ENCODE measurements at regions of chr1 and their contacts with region 1.

Region 1: DNA sequence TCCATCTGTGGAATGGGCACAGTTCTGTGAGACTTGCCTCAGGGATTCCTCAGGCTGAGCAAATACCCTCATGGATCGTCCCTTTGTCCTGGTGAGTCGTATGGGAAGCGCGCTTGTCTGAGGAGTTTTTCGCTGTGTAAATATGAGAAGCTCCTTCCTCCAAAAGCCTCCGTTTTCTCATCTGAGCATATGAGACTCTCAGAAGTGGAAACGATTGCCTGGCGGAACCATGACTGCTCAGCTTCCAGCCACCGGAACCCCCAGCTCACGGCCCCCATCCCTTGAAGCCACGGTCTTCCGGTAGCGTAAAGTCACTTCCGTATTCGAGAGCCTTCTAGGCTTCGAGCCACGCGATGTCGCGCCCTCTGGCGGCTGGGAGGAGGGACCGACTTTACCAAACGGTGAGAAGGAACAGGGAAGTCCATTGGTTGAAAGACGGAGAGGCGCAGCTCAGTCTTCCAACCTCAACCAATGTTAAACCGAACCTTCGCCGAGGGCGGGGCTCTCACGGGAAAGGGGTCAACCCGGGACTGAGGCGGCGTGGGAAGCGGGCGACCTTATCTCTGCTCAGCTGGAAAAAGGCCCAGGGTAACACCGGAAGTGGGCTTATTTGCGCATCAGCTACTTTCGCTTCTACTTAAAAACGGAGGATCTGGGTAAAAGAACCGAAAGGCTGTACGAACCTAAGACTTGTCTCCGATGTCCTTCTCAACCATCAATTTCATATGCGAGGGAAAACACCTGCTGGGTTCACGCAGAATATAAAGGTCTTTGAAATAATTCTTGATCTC is 46.2 kb downstream of the AZIN2 start:
- DNase-seq: peak; percentile 97 to 99
- H3K4me3 ChIP-seq: peak overlapping the region; percentile 85
- H3K27ac ChIP-seq: peak overlapping the region; percentile 77
- H3K4me1 ChIP-seq: peaks cover 28% of the 10 kb centered on the region
- H3K27me3 ChIP-seq: no peaks in the 10 kb centered on the region
- CTCF ChIP-seq: peak; percentile 88

Region 2: DNA sequence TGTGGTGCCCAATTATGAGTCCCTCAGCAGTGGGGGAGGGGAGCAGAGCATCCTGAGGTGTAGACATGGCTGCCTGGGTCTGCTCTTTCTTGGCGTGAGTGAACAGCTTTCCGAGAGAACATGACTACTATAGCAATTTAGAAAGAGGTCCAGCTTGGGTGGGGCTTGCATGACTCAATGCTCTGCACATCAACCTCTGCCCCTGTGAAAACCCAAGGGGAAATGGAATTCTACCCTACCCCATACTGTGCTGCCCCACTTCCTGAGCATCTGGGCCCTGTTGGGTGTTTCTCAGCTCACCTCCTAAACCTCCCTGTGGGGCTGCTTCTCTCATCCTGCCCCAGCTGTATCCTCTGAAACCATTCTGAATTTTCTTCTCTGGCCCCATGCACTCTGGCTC is 54.5 kb before region 1 on chr1:
- CTCF ChIA-PET with region 1: no interaction called
- POLR2A ChIA-PET with region 1: no interaction called
- intact Hi-C with region 1: no loop called
- DNase-seq: no peak
- H3K4me3 ChIP-seq: no peak overlapping the region
- H3K27ac ChIP-seq: no peak overlapping the region
- H3K4me1 ChIP-seq: peaks cover 11% of the 10 kb centered on the region
- H3K27me3 ChIP-seq: no peaks in the 10 kb centered on the region
- CTCF ChIP-seq: no peak

Region 3: DNA sequence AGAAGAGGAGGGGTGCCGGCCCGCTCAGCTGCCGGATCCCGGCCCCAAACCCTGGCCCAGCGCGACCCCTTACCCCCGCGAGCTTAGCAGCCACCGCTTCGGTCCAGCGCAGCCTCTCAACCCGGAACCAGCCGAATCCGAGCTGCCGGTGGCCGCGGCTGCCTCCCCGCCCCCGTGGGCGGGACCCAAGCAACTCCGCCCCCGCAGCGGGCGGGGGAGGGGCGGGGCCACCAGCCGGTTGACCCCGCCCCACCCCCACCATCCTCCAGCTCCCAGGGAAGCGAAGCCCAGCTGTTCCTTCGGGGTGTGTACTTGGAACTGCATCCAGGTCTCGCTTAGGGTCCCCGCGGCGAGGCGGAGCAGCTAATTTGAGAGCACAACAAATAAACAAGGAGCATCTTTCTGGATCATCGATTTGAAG is 54.7 kb after region 1 on chr1 and contains the start of gene TRIM62:
- CTCF ChIA-PET with region 1: interaction called, 4 read pairs
- POLR2A ChIA-PET with region 1: interaction called, 5 read pairs
- intact Hi-C with region 1: loop called (anchors 5 kb)
- DNase-seq: peak; percentile 54 to 77
- H3K4me3 ChIP-seq: peak within 1 kb of the TSS; percentile 87
- H3K27ac ChIP-seq: no peak within 1 kb of the TSS
- H3K4me1 ChIP-seq: peaks cover 4% of the 10 kb centered on the region; the same call in 1 of the 2 replicates
- H3K27me3 ChIP-seq: no peaks in the 10 kb centered on the region
- CTCF ChIP-seq: no peak
- total RNA-seq, gene TRIM62: 9.9 and 14.3 TPM in 2 replicates

Region 4: GRCh38 chr1:33211972-33212371 is 84.8 kb after region 1 on chr1:
- CTCF ChIA-PET with region 1: no interaction called
- POLR2A ChIA-PET with region 1: interaction called, 14 read pairs
- intact Hi-C with region 1: no loop called
- DNase-seq: no peak
- H3K4me3 ChIP-seq: no peak overlapping the region
- H3K27ac ChIP-seq: no peak overlapping the region
- H3K4me1 ChIP-seq: no peaks in the 10 kb centered on the region
- H3K27me3 ChIP-seq: no peaks in the 10 kb centered on the region
- CTCF ChIP-seq: no peak

Region 5: DNA sequence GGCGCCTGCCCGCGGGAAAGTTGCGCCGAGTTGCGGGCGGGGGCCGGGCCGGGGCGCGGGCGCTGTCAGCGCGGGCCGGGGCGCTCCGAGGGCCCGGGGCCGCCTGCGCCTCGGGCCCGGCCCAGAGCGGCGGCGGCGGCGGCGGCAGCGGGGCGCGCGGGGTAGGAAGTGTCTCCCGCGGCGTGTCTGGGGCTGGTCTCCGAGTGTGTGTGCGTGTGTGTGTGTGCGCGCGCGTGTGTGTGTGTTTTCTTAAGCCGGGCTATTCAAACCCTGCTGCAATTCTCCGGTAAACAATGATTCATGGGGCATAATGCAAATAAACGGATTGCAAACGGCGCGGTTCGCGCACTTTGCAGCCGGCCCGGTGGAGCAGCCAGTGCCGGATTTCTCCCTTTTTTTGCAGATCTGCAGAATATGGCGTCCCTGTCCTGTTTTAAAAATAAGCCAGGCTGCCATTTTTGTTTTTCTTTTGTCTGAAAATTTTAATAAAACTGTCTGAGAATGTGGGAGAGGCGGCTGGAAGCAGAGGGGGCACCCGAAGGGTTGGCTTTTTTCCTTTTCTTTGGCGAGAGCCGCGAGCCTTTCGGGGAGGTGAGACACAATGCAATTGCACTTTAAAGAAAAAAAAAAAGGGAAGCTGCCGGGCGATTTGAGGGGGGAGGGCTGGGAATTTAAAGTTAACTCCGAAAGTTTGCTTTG is 129.7 kb after region 1 on chr1:
- CTCF ChIA-PET with region 1: no interaction called
- POLR2A ChIA-PET with region 1: interaction called, 19 read pairs
- intact Hi-C with region 1: no loop called
- DNase-seq: peak; percentile 41 to 77
- H3K4me3 ChIP-seq: peak overlapping the region; percentile 67
- H3K27ac ChIP-seq: peak overlapping the region; percentile 62
- H3K4me1 ChIP-seq: peaks cover 22% of the 10 kb centered on the region
- H3K27me3 ChIP-seq: no peaks in the 10 kb centered on the region
- CTCF ChIP-seq: no peak

Region 6: GRCh38 chr1:33312413-33312749 is 185.2 kb after region 1 on chr1:
- CTCF ChIA-PET with region 1: no interaction called
- POLR2A ChIA-PET with region 1: no interaction called
- intact Hi-C with region 1: no loop called
- DNase-seq: no peak
- H3K4me3 ChIP-seq: no peak overlapping the region
- H3K27ac ChIP-seq: no peak overlapping the region
- H3K4me1 ChIP-seq: no peaks in the 10 kb centered on the region
- H3K27me3 ChIP-seq: no peaks in the 10 kb centered on the region
- CTCF ChIP-seq: no peak

Region 7: DNA sequence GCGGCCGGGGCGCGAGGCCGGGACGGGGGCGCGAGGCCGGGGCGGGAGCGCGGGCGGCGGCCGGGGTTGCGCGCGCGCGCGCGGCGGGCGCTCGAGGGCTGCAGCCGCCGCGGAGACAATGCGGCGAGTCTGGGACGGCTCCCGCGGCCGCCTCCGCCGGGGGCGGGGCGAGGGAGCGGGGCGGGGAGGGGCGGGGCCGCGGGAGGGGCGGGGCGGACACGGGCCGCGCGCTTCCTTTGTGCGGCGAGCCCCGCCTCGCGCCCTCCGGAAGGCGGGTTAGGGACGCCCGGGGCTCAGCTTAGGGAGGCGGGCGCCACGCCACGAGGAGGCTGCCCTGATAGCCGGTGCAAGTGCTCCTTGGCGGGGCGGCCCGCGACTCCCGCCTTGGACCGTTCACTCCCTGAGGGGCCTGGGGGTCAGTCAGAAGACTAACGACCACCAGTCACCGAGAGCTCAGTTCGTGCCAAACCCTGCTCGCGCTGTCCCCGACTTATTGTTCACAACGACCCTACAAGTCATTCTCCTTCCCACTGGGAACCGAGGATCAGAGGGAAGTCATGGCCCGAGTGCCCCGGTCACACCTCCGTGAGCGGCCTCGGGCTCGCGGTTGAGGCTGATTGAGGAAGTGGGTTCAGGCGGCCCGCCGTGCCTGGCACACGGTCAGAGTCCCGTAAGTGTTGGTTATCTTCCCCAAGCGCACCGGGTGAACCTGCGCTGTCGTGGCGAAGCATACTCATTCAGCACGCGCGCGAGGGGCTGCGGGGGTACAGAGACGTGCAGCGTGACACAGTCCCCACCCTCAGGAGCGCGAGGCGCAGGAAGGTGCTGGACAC is 222.8 kb after region 1 on chr1:
- CTCF ChIA-PET with region 1: no interaction called
- POLR2A ChIA-PET with region 1: no interaction called
- intact Hi-C with region 1: loop called (anchors 5 kb)
- DNase-seq: peak; percentile 69 to 81
- H3K4me3 ChIP-seq: peak overlapping the region; percentile 79
- H3K27ac ChIP-seq: peak overlapping the region; percentile 67
- H3K4me1 ChIP-seq: peaks cover 53% of the 10 kb centered on the region
- H3K27me3 ChIP-seq: no peaks in the 10 kb centered on the region
- CTCF ChIP-seq: no peak

Region 8: GRCh38 chr1:33455539-33456501 is 328.6 kb after region 1 on chr1:
- CTCF ChIA-PET with region 1: interaction called, 5 read pairs
- POLR2A ChIA-PET with region 1: interaction called, 12 read pairs
- intact Hi-C with region 1: no loop called
- DNase-seq: peak; percentile 50 to 51
- H3K4me3 ChIP-seq: no peak overlapping the region
- H3K27ac ChIP-seq: no peak overlapping the region
- H3K4me1 ChIP-seq: peaks cover 32% of the 10 kb centered on the region
- H3K27me3 ChIP-seq: no peaks in the 10 kb centered on the region
- CTCF ChIP-seq: peak; percentile 76

Region 9: DNA sequence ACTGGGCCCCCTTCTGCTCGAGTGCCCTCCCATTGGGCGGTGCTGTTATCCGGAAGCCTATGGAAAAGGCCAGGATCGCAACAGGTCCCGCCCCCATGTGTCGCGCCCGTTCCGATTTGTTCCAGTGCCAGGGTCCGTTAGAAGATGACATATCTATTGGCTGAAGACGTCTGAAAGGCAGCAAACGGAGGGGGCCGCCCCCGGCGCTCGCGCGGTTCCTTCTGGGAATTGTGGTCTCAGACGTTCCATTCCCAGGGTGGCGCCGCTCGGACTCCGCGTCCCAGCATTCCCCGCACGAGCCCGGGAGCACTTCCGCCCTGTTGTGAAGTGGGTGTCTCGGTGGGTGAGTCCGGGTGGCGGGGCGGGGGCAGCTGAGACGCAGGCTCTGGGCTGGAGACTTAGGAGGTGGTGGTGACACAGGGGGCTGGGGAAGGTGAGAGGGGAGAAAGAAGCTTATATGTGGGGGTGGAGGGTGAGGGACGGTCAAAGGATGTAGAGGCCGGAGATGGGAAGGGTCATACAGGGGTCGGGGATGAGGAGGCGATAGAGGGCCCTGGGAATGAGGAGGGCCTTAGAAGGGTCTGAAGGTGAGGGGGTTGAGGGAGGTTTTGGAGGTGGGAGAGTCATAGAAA is 345.3 kb after region 1 on chr1 and contains the start of gene ZSCAN20:
- CTCF ChIA-PET with region 1: no interaction called
- POLR2A ChIA-PET with region 1: no interaction called
- intact Hi-C with region 1: loop called (anchors 5 kb)
- DNase-seq: peak; percentile 92 to 96
- H3K4me3 ChIP-seq: peak within 1 kb of the TSS; percentile 66
- H3K27ac ChIP-seq: no peak within 1 kb of the TSS
- H3K4me1 ChIP-seq: peaks cover 10% of the 10 kb centered on the region
- H3K27me3 ChIP-seq: no peaks in the 10 kb centered on the region
- CTCF ChIP-seq: no peak
- total RNA-seq, gene ZSCAN20: 6.0 and 6.4 TPM in 2 replicates